ENCODE measurements at regions of chr16 and their contacts with region 1.

Region 1: DNA sequence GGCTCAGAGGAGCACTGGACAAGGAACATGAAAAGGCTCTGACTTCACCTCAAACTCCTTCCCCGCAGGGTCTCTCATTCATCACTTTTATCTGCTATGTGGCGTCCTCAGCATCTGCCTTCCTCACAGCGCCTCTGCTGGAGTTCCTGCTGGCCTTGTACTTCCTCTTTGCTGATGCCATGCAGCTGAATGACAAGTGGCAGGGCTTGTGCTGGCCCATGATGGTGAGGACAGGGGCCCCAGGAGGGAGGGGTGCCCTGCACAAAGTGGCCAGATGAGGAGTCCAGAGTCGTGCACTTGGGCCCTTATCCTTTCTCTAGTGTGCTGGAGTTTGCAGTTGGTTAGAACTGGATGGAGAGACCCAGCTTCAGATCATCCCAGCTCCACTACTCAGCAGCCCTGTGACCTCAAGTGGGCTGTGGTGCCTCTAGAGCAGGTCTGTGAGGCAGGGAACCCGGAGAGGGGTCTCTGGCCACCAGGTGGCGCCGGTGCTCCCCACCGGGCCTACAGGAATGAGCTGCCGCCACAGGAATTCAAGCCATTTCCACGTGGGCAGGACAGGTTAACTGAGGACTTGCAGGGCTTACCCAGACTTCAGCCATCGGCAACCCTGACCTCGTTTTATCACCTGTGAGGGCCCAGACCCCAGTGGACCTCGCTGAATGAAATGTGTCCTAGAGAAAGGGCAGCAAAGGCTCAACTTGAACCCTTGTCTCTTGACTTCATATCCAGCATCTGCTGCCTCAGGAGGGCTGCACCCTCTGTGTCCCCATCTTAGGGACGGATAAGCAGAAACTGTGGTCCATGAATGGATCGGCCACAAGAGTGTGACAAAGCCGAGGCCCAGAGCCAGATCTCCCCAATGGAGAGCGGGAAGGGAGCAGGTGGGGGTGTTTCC is 4.0 kb downstream of the CMTM3 start:
- DNase-seq: peak; percentile 95 to 96
- H3K4me3 ChIP-seq: no peak overlapping the region
- H3K4me3 Mint-ChIP-seq: no peak overlapping the region
- H3K27ac Mint-ChIP-seq: peak overlapping the region; percentile 54
- H3K4me1 ChIP-seq: peaks cover 29% of the 10 kb centered on the region
- H3K4me1 Mint-ChIP-seq: peaks cover 26% of the 10 kb centered on the region
- H3K27me3 ChIP-seq: no peaks in the 10 kb centered on the region
- H3K27me3 Mint-ChIP-seq: no peaks in the 10 kb centered on the region
- CTCF ChIP-seq: peak; percentile 96 to 99

Region 2: DNA sequence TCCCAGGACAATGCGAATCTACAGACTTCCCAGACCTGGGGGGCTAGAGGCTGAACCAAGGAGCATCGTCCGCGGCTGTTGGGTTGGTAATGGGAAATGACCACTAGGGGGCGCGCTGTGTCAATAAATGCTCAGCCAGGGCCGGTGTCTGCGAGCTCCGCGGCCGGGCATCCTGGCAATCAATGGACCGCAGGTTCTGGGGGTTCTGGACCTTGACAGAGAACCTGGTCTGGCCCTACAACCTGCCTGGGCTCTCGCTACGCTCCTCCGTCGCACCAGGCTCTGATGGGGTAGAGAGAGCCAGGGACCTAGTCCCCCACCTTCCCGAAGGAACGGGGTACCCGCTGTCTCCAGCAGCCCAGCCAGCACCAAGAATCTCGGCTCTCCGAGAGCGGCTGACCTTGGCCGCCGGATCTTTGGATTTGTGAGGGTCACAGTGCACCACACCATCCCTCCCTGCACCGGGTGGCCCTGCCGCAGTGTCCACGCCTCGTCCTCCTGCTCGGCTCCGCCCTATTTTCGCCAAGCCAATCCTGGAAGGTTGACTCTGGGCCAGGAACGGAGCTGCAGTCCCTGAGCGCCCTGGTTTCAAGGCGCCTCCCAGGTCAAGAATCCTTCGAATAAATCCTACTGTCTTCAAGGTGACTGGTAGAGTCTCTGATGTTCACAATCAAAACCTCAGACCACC is 201.8 kb before region 1 on chr16:
- CTCF ChIA-PET with region 1: interaction called, 13 read pairs
- POLR2A ChIA-PET with region 1: no interaction called
- intact Hi-C with region 1: loop called (anchors 5 kb)
- DNase-seq: peak; percentile 74 to 88
- H3K4me3 ChIP-seq: peak overlapping the region; percentile 34
- H3K4me3 Mint-ChIP-seq: peak overlapping the region; percentile 75
- H3K27ac Mint-ChIP-seq: no peak overlapping the region
- H3K4me1 ChIP-seq: peaks cover 15% of the 10 kb centered on the region; the same call in 1 of the 2 replicates
- H3K4me1 Mint-ChIP-seq: peaks cover 9% of the 10 kb centered on the region
- H3K27me3 ChIP-seq: no peaks in the 10 kb centered on the region
- H3K27me3 Mint-ChIP-seq: peaks cover 7% of the 10 kb centered on the region
- CTCF ChIP-seq: peak; percentile 81 to 93

Region 3: DNA sequence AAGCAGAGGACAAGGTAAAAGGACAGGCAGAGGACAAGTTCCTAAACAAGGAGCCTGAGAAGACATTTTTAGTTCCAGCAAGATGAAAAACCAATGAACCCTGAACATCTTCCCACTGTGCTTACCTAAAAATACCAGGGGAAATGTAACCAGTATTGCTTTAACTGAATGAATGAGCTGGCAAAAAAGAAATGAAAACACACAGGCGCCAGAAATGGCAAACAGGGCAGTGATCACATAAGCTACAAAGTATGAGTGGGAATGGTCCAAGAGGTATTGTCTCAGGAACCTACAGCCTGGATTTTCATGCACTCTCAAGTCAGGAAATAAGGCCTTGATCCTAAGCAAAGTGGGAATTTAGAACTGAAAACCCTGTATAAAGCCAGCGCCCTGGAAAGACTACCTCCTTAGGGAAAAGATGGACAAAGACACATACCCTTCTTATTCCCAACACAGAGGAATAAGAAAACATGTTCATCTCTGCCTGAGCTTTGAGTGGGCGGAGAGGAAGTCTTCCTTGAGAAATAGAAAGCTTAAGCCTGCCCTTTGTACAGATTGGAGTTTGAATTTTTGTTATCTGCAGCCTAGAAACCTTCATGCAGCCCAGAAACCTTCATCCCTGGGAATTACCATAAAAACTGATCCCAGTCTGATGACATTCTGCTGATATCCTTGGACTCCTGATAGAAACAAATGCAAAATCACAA is 27.1 kb before region 1 on chr16:
- CTCF ChIA-PET with region 1: interaction called, 10 read pairs
- POLR2A ChIA-PET with region 1: no interaction called
- intact Hi-C with region 1: no loop called
- DNase-seq: no peak
- H3K4me3 ChIP-seq: no peak overlapping the region
- H3K4me3 Mint-ChIP-seq: no peak overlapping the region
- H3K27ac Mint-ChIP-seq: no peak overlapping the region
- H3K4me1 ChIP-seq: peaks cover 9% of the 10 kb centered on the region; the same call in 1 of the 2 replicates
- H3K4me1 Mint-ChIP-seq: no peaks in the 10 kb centered on the region
- H3K27me3 ChIP-seq: no peaks in the 10 kb centered on the region
- H3K27me3 Mint-ChIP-seq: peaks cover 3% of the 10 kb centered on the region
- CTCF ChIP-seq: no peak

Region 4: DNA sequence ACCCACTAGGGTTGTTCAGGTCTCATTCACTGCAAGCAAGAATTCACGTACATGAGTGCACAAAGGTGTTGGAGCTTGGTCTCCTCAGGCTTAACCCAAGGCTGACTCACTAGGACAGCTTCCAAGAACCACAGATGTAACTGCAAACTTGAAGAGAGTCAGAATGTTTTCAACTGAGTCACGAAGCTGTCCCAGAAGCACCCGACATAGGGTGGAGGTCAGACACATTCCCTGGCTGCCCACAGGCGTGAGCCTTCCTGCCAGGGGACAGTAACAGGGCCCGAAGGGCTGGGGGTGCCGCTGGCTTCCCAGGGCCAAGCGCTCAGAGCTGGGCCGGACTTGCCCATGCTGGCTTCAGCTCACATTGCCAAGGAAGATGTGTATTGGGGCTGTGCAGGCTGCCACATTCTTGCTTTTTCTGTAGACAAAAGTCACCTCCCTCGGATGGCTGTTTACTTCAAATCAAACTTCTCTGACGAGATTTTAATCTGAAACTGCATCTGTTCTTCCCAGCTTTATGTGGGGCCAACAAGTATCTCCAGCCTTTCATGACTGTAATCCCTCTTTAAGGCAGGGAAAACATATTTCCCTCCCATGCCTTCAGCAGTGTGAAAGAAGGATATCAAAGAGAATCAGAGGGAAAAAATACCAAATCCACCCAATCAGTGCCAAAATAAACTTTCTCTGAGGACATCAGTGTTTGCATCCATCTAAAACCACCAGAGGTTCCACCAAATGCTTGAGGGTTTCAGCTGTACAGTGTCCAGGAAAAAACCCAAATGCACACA is 10.3 kb after region 1 on chr16:
- CTCF ChIA-PET with region 1: interaction called, 14 read pairs
- POLR2A ChIA-PET with region 1: no interaction called
- intact Hi-C with region 1: no loop called
- DNase-seq: no peak
- H3K4me3 ChIP-seq: no peak overlapping the region
- H3K4me3 Mint-ChIP-seq: no peak overlapping the region
- H3K27ac Mint-ChIP-seq: no peak overlapping the region
- H3K4me1 ChIP-seq: no peaks in the 10 kb centered on the region
- H3K4me1 Mint-ChIP-seq: no peaks in the 10 kb centered on the region
- H3K27me3 ChIP-seq: no peaks in the 10 kb centered on the region
- H3K27me3 Mint-ChIP-seq: no peaks in the 10 kb centered on the region
- CTCF ChIP-seq: no peak

Region 5: DNA sequence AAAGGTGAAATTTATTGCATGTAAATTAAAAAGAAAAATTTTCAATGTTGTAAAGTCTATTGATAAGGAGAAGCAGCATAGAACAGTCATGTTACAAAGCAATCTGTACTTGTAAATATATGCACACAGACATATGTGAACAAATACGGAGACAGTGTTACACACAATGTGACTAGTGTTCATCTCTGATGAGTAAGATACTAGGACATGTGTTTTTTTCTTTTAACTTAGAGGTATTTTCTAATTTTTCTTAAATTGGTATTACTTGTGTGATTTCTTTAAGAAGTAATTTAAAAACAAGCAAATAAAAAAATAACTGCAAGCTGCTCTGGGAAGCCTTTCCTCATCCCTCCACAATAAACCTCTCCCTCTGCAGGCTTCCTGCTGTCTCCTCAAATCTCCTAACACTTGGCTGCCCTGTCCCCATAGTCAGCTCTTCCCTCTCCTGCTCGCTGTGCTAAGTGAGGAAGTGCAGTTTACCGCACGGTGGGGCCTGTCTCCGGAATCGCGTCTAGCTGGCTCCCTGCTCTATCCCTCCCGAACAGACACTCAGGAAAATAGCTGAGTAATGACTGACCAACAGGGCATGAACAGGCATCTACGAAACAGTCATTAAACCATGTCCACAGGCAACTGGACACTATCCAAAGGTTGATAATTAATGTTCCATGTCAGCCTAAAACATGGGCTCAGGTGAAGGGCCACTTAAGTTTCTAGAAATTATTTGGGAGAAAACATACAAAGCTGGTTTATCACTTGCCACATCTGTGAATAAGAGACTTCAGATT is 52.1 kb after region 1 on chr16:
- CTCF ChIA-PET with region 1: interaction called, 16 read pairs
- POLR2A ChIA-PET with region 1: no interaction called
- intact Hi-C with region 1: no loop called
- DNase-seq: no peak
- H3K4me3 ChIP-seq: no peak overlapping the region
- H3K4me3 Mint-ChIP-seq: no peak overlapping the region
- H3K27ac Mint-ChIP-seq: no peak overlapping the region
- H3K4me1 ChIP-seq: no peaks in the 10 kb centered on the region
- H3K4me1 Mint-ChIP-seq: peaks cover 6% of the 10 kb centered on the region
- H3K27me3 ChIP-seq: no peaks in the 10 kb centered on the region
- H3K27me3 Mint-ChIP-seq: no peaks in the 10 kb centered on the region
- CTCF ChIP-seq: no peak

Region 6: DNA sequence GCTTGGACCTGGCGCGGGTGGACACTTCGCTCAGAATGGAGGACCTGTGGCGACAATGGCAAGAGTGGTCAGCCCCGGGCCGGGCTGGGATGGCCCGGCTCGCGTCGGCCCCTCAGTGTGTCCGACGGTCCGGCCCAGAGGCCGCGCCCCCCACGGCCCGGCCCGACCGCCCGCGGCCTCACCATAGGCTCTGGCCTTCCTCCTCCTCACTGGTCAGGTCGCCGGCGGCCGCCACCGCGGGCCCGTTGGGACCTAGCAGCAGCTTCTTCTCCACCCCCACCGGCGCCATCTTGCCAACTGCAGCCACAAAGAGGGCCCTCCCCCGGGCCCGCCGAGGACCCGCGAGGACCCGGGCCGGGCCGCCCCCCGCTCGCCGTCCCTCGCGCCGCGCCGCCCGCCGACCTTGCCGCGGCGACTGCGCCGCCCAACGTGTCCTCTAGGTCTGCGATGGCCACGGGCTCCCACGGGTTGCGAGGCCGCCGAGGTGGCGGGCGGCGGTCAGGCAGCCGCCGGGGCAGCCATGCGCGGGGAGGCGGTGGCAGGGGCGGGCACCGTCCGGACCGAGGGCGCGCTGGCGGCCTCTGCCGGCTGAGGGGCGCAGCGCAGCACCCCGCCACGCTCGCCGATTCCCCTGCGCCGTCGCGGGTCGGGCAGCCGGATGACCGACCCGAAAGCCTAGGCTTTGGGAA is 143.0 kb after region 1 on chr16 and contains the start of gene DYNC1LI2:
- CTCF ChIA-PET with region 1: interaction called, 3 read pairs
- POLR2A ChIA-PET with region 1: no interaction called
- intact Hi-C with region 1: loop called (anchors 5 kb)
- DNase-seq: peak; percentile 78 to 94
- H3K4me3 ChIP-seq: peak within 1 kb of the TSS; percentile 100
- H3K4me3 Mint-ChIP-seq: peak within 1 kb of the TSS; percentile 78
- H3K27ac Mint-ChIP-seq: peak within 1 kb of the TSS; percentile 55
- H3K4me1 ChIP-seq: peaks cover 12% of the 10 kb centered on the region; the same call in 1 of the 2 replicates
- H3K4me1 Mint-ChIP-seq: peaks cover 26% of the 10 kb centered on the region
- H3K27me3 ChIP-seq: no peaks in the 10 kb centered on the region
- H3K27me3 Mint-ChIP-seq: no peaks in the 10 kb centered on the region
- CTCF ChIP-seq: peak; percentile 61 to 95
- total RNA-seq, gene DYNC1LI2: 180 and 182 TPM in 2 replicates

Measured in Caco-2 (cell line).